ENCODE measurements at regions of chr4 and their contacts with region 1.

Region 1: DNA sequence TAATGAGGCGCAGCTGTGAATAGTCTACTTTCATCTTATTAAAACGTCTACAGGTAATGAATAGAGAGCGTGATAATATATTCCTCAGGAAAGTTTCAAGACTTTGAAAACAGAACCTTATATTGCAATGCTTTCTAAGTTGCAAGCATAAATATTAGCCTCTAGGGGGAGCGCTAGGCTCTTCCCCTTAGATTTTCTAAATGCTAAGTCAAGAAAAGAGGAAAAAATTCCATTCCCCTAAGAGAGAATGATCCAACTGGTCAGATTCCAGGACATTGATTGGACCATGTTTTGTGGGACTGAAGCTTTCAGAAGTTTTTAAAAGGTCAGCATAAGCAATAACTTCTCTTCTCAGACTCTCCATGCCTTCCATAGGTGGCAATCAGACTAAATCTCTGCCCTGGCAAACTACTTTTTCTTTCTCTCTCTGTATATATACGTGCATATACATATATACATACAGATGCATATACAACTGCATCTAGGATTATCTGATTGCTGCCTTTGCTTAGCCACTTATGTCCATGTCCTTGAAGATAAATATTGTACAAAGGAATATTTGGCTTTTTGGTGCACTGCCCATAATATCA is 492.9 kb downstream of the INPP4B start:
- DNase-seq: no peak
- H3K4me3 ChIP-seq: no peak overlapping the region
- H3K27ac ChIP-seq: peak overlapping the region in 1 of 4 donors; percentile 20
- H3K4me1 ChIP-seq: peaks cover 0 to 56% (median 20%) of the 10 kb centered on the region in 4 donors
- H3K27me3 ChIP-seq: no peaks in the 10 kb centered on the region
- CTCF ChIP-seq: peak; percentile 71 to 92 (median 85)
- EP300 ChIP-seq: no peak
- POLR2A ChIP-seq: no peak

Region 2: GRCh38 chr4:142314686-142315085 is 38.6 kb before region 1 on chr4:
- in situ Hi-C with region 1: no loop called
- intact Hi-C with region 1: no loop called
- DNase-seq: peak; percentile 64
- H3K4me3 ChIP-seq: peak overlapping the region in 1 of 4 donors; percentile 32
- H3K27ac ChIP-seq: peak overlapping the region; percentile 74 to 81 (median 77)
- H3K4me1 ChIP-seq: peaks cover 0 to 36% (median 16%) of the 10 kb centered on the region in 4 donors
- H3K27me3 ChIP-seq: no peaks in the 10 kb centered on the region
- CTCF ChIP-seq: no peak
- EP300 ChIP-seq: no peak
- POLR2A ChIP-seq: no peak

Region 3: GRCh38 chr4:142405021-142405694 is 51.9 kb after region 1 on chr4:
- in situ Hi-C with region 1: no loop called
- intact Hi-C with region 1: no loop called
- DNase-seq: peak; percentile 33
- H3K4me3 ChIP-seq: peak overlapping the region; percentile 25 to 45 (median 32)
- H3K27ac ChIP-seq: peak overlapping the region; percentile 48 to 74 (median 62)
- H3K4me1 ChIP-seq: peaks cover 0 to 31% (median 14%) of the 10 kb centered on the region in 4 donors
- H3K27me3 ChIP-seq: no peaks in the 10 kb centered on the region
- CTCF ChIP-seq: no peak
- EP300 ChIP-seq: no peak
- POLR2A ChIP-seq: no peak

Region 4: DNA sequence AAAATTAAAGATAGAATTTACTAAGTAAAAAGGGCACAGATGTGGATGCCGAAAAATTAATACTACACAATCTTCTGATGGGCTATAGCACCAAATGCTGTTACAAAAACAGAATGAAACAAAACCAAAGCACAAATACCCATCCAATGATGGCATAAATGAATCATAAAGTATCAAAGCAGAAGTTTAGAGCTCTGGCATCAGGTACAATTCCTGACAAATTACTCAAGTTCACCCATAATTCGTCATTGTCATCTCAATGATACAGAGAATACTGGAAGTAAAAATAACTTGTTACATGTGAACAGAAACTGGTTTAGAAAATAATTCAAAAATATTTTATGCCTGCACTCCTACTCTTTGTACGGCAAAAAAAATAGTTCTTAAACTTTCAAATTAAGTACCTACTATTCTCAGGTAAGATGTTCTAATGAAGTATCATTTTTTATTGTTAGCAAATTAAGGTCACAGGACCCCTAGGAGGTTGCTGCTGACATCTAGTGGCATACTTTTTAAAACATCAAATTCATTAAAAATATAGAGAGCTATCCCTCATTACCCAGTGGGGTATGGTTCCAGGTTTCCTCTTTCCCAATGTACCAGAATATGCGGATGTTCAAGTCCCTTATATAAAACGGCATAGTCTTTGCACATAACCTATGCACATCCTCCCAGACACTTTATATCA is 366.8 kb after region 1 on chr4:
- in situ Hi-C with region 1: loop called in 2 of 4 experiments (anchors 25 kb)
- intact Hi-C with region 1: no loop called
- DNase-seq: no peak
- H3K4me3 ChIP-seq: no peak overlapping the region
- H3K27ac ChIP-seq: no peak overlapping the region
- H3K4me1 ChIP-seq: no peaks in the 10 kb centered on the region
- H3K27me3 ChIP-seq: no peaks in the 10 kb centered on the region
- CTCF ChIP-seq: peak; percentile 27 to 44 (median 33)
- EP300 ChIP-seq: no peak
- POLR2A ChIP-seq: no peak

Region 5: GRCh38 chr4:142817442-142817841 is 464.2 kb after region 1 on chr4:
- in situ Hi-C with region 1: no loop called
- intact Hi-C with region 1: no loop called
- DNase-seq: no peak
- H3K4me3 ChIP-seq: no peak overlapping the region
- H3K27ac ChIP-seq: peak overlapping the region in 1 of 4 donors; percentile 2
- H3K4me1 ChIP-seq: peaks cover 0 to 22% (median 8%) of the 10 kb centered on the region in 4 donors
- H3K27me3 ChIP-seq: no peaks in the 10 kb centered on the region
- CTCF ChIP-seq: no peak
- EP300 ChIP-seq: no peak
- POLR2A ChIP-seq: no peak